ENCODE measurements at regions of chr7 and their contacts with region 1.

Region 1: GRCh38 chr7:135274495-135275268 is 41.0 kb downstream of the STRA8 start:
- DNase-seq: peak; percentile 88

Region 2: GRCh38 chr7:135260930-135261721 is 13.6 kb before region 1 on chr7:
- CTCF ChIA-PET with region 1: interaction called, 24 read pairs
- POLR2A ChIA-PET with region 1: no interaction called
- DNase-seq: peak; percentile 49

Region 3: GRCh38 chr7:135335628-135336139 is 61.0 kb after region 1 on chr7:
- CTCF ChIA-PET with region 1: interaction called, 56 read pairs
- POLR2A ChIA-PET with region 1: interaction called, 3 read pairs
- DNase-seq: peak; percentile 83